ENCODE measurements at regions of chr6 and their contacts with region 1.

Region 1: DNA sequence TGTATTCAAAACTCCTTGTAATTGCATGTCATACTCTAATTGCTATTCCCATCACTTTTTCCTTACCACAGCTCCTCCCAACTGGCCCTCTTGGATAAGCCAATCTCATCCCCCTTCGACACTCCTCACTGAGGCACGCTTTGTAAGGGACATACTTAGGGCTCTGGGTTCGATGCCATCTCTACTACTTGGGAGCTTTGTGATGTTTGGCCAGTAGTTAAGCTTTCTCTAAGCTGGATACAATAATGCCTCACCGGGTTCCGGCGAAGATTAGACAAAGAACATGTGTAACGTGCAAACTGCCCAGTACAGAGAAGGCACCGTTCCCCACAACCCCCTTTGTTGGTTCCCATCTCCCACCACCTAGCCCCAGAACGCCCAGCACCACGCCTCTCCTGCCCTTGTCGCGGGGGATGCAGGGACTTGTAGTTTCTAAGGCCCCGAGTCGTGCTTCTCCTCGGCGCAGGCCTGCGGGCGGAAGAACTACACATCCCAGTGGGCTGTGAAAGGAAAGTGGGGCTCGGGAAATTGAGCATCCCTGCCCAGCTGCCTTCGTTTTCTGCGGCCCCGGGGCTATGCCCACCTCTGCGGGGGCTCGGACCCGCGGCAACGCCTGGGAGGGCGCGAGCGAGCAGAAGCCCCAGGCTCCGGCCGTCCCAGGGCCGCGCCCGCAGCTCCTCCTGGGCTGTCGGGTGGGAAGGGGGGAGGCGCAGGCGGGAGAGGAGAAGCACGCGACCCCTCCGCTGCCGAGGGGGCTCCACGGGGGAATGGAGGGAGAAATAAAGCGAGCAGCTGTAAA is 1.1 kb upstream of the ZDHHC14 start:
- DNase-seq: peak; percentile 93
- ATAC-seq: peak; percentile 77
- H3K4me3 Mint-ChIP-seq: peak overlapping the region; percentile 79
- H3K27ac Mint-ChIP-seq: peak overlapping the region; percentile 78
- H3K4me1 Mint-ChIP-seq: peaks cover 27% of the 10 kb centered on the region
- H3K27me3 Mint-ChIP-seq: peaks cover 3% of the 10 kb centered on the region

Region 2: GRCh38 chr6:157358287-157358686 is 21.6 kb before region 1 on chr6:
- CTCF ChIA-PET with region 1: no interaction called
- POLR2A ChIA-PET with region 1: no interaction called
- DNase-seq: no peak
- ATAC-seq: no peak
- H3K4me3 Mint-ChIP-seq: no peak overlapping the region
- H3K27ac Mint-ChIP-seq: no peak overlapping the region
- H3K4me1 Mint-ChIP-seq: no peaks in the 10 kb centered on the region
- H3K27me3 Mint-ChIP-seq: peaks cover 37% of the 10 kb centered on the region

Region 3: DNA sequence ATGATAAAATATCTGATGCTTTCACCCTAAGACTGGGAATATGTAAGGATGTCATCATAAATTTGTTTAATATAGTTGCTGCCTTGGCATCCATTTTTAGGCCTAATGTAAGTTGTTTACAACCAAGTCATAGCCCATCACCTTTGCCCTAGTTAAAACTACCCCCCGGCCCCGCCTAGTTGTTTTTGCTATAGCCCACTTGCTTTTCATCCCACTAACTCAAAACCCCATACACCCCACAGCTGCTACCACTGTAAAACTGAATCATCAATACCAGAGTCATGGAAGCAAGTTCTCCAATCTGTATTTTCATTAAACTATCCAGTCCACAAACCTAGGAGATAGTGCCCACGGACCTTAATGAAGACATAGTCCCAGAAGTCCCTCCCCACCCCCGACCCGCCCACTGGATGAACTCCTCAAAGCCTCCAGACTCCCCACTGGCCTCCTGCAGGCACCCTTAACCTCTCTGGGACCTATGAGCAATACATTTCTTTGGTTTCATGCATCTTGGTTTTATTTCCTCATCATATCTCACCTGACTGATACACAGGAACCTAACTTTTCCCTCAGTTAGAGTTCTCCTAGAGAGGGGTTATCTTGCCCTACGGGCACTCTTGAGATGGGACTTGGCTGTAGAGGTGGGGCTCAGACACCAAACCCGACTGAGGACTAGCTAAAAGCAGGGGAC is 11.4 kb before region 1 on chr6:
- CTCF ChIA-PET with region 1: interaction called, 11 read pairs
- POLR2A ChIA-PET with region 1: no interaction called
- DNase-seq: no peak
- ATAC-seq: no peak
- H3K4me3 Mint-ChIP-seq: no peak overlapping the region
- H3K27ac Mint-ChIP-seq: no peak overlapping the region
- H3K4me1 Mint-ChIP-seq: peaks cover 20% of the 10 kb centered on the region
- H3K27me3 Mint-ChIP-seq: peaks cover 43% of the 10 kb centered on the region

Region 4: DNA sequence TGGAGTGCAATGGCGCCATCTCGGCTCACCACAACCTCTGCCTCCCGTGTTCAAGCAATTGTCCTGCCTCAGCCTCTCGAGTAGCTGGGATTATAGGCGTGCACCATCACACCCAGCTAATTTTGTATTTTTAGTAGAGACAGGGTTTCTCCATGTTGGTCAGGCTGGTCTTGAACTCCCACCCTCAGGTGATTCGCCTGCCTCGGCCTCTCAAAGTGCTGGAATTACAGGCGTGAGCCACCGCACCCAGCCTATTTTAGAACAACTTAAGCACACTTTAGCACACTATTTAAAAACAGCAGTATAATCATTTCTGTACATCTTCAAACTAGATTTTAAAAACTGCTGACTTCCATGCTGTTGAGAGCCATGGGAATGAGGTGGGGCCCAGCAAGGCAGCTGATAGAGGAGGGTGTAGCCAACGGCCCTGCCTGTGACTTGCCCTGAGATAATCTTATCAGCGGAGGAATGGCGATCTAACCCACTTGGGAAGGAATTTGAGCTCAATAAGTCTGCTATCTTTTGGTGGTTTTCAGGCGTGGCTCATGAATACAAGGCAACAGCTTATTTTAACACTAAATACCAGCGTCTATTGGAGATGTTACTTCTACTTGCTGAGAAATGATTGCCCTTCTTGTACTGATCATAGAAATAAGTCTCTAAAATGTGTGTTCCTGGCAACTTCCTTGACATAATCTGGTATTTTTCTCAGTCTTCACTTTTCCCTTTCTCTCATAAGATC is 13.2 kb after region 1 on chr6:
- CTCF ChIA-PET with region 1: no interaction called
- POLR2A ChIA-PET with region 1: no interaction called
- DNase-seq: no peak
- ATAC-seq: no peak
- H3K4me3 Mint-ChIP-seq: no peak overlapping the region
- H3K27ac Mint-ChIP-seq: no peak overlapping the region
- H3K4me1 Mint-ChIP-seq: no peaks in the 10 kb centered on the region
- H3K27me3 Mint-ChIP-seq: no peaks in the 10 kb centered on the region

Measured in activated CD8-positive, alpha-beta T cell treated with anti-CD3 and anti-CD28 coated beads, Interleukin-2, amount 10 ng/mL, durations not matched to agents 7 days and 5 days (primary cell).